ENCODE measurements at regions of chr3 and their contacts with region 1.

Region 1: GRCh38 chr3:172511783-172512762 is 11.2 kb downstream of the TNFSF10 start:
- DNase-seq: peak; percentile 89
- H3K4me3 Mint-ChIP-seq: peak overlapping the region; percentile 52
- H3K27ac Mint-ChIP-seq: peak overlapping the region; percentile 93
- H3K4me1 Mint-ChIP-seq: peaks cover 81% of the 10 kb centered on the region
- H3K27me3 Mint-ChIP-seq: no peaks in the 10 kb centered on the region

Region 2: GRCh38 chr3:172129870-172130683 is 382.0 kb before region 1 on chr3:
- CTCF ChIA-PET with region 1: no interaction called
- POLR2A ChIA-PET with region 1: no interaction called
- intact Hi-C with region 1: loop called (anchors 10 kb)
- DNase-seq: peak; percentile 81
- H3K4me3 Mint-ChIP-seq: peak overlapping the region; percentile 17
- H3K27ac Mint-ChIP-seq: peak overlapping the region; percentile 64
- H3K4me1 Mint-ChIP-seq: peaks cover 53% of the 10 kb centered on the region
- H3K27me3 Mint-ChIP-seq: no peaks in the 10 kb centered on the region

Region 3: GRCh38 chr3:172530566-172530965 is 18.5 kb after region 1 on chr3:
- CTCF ChIA-PET with region 1: interaction called, 7 read pairs
- POLR2A ChIA-PET with region 1: interaction called, 29 read pairs
- intact Hi-C with region 1: loop called (anchors 1 kb)
- DNase-seq: peak; percentile 42
- H3K4me3 Mint-ChIP-seq: peak overlapping the region; percentile 23
- H3K27ac Mint-ChIP-seq: peak overlapping the region; percentile 86
- H3K4me1 Mint-ChIP-seq: peaks cover 24% of the 10 kb centered on the region
- H3K27me3 Mint-ChIP-seq: no peaks in the 10 kb centered on the region

Region 4: GRCh38 chr3:172562871-172563863 is 51.1 kb after region 1 on chr3:
- CTCF ChIA-PET with region 1: interaction called, 7 read pairs
- POLR2A ChIA-PET with region 1: interaction called, 4 read pairs
- intact Hi-C with region 1: loop called (anchors 1 kb)
- DNase-seq: peak; percentile 64
- H3K4me3 Mint-ChIP-seq: peak overlapping the region; percentile 42
- H3K27ac Mint-ChIP-seq: peak overlapping the region; percentile 94
- H3K4me1 Mint-ChIP-seq: peaks cover 33% of the 10 kb centered on the region
- H3K27me3 Mint-ChIP-seq: no peaks in the 10 kb centered on the region

Region 5: GRCh38 chr3:172750368-172751174 is 238.5 kb after region 1 on chr3 and contains the start of gene ECT2:
- CTCF ChIA-PET with region 1: interaction called, 6 read pairs
- POLR2A ChIA-PET with region 1: no interaction called
- intact Hi-C with region 1: loop called (anchors 10 kb)
- DNase-seq: peak; percentile 99
- H3K4me3 Mint-ChIP-seq: peak within 1 kb of the TSS; percentile 87
- H3K27ac Mint-ChIP-seq: peak within 1 kb of the TSS; percentile 87
- H3K4me1 Mint-ChIP-seq: peaks cover 22% of the 10 kb centered on the region
- H3K27me3 Mint-ChIP-seq: peaks cover 1% of the 10 kb centered on the region
- total RNA-seq, gene ECT2: 48.2 to 52.8 TPM

Measured in activated CD4-positive, alpha-beta memory T cell treated with anti-CD3 and anti-CD28 coated beads for 36 hours (primary cell).